Naive thymus-derived CD4-positive, alpha-beta T cell (primary cell): ENCODE measurements at regions of chr5 and their contacts with region 1.

Region 1: DNA sequence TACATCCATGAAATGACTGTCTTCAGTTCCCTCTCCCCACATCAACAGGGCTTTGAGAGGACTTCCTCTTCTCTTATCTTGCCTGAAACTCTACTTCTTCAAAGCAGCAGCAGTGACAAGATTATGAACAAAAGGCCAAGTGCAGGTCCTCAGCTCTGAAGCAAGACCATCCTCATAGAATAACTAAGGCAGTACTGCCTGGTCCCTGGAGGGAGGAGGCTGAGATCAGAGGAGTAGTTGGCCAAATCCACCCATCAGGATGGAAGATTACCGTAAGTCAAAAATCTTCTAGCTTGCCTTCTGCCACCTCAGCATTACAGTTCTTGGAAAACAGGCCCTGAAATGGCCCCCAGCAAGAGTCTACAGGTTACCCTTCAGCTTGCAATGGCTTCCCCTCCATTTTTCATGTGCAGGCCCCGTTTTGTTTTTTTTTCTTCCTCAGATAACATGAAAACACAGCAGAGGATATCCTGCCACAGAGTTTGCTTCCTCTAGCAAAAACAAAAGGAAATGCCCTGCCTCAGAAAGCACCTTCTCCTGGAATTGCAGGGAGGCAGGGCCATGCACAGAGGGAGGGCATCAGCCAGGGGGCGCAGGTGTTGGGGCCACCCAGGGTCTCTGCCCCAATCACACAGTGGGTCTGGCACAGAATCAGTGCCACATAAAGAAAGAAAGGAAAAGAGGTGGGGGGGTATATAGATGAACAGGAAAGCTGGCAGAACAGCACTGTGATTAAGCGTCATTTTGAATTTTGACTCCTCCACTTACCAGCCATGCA is 40.0 kb downstream of the KLHL3 start:
- DNase-seq: peak in 8 of 9 donors; percentile 7 to 77 (median 68)
- ATAC-seq: peak; percentile 82
- H3K4me3 ChIP-seq: peak overlapping the region; percentile 38
- H3K4me3 Mint-ChIP-seq: peak overlapping the region; percentile 62 to 85 (median 78)
- H3K27ac ChIP-seq: peak overlapping the region; percentile 58
- H3K27ac Mint-ChIP-seq: peak overlapping the region; percentile 90 to 98 (median 96)
- H3K4me1 ChIP-seq: peaks cover 22 to 47% of the 10 kb centered on the region in 2 donors
- H3K4me1 Mint-ChIP-seq: peaks cover 31 to 78% (median 76%) of the 10 kb centered on the region in 7 donors
- H3K27me3 ChIP-seq: no peaks in the 10 kb centered on the region
- H3K27me3 Mint-ChIP-seq: no peaks in the 10 kb centered on the region

Region 2: DNA sequence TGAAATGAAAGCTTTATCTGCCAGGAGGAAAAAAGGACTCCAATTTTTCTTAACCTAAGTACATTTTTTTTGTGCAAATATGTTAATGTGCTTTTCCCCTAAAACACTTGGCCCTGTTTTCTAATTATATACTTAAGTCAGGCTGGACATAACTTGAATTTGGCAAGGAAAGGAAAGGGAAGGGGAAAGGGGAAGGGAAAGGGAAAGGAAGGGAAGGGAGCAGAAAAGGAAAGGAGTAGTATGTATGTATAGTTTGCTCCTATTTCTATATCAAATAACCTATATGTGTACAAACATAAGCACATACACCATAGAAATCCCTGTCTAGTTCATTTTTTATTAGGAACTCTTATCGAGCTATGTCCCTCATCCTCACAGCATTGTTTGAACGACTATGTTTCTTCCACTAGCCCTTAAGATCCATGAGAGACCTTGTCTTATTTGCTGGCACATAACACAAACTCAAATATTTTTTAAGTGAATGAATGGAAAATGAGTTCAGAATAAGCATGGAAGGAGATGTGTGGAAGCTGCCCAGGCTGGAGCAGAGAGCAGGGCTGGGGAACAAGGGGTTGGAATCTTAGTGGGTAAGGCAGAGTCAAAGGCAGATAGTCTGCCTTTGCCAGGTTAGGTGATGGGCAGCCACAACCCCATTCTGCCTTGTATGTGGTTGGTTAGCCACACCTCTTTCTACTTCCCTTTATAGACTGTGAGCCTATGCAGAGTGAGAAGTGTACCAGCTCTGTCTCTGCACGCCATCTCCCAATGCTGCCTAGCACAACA is 30.0 kb before region 1 on chr5:
- CTCF ChIA-PET with region 1: interaction called, 73 read pairs
- POLR2A ChIA-PET with region 1: interaction called, 29 read pairs
- intact Hi-C with region 1: loop called in 1 of 2 experiments (anchors 2 kb)
- DNase-seq: peak in 8 of 9 donors; percentile 23 to 66 (median 53)
- ATAC-seq: peak; percentile 99
- H3K4me3 ChIP-seq: no peak overlapping the region
- H3K4me3 Mint-ChIP-seq: peak overlapping the region in 6 of 10 donors; percentile 18 to 56 (median 46)
- H3K27ac ChIP-seq: peak overlapping the region; percentile 30
- H3K27ac Mint-ChIP-seq: peak overlapping the region; percentile 43 to 91 (median 70)
- H3K4me1 ChIP-seq: peaks cover 7 to 9% of the 10 kb centered on the region in 2 donors
- H3K4me1 Mint-ChIP-seq: peaks cover 8 to 35% (median 27%) of the 10 kb centered on the region in 7 donors
- H3K27me3 ChIP-seq: no peaks in the 10 kb centered on the region
- H3K27me3 Mint-ChIP-seq: no peaks in the 10 kb centered on the region

Region 3: GRCh38 chr5:137684761-137685160 is 11.1 kb before region 1 on chr5:
- CTCF ChIA-PET with region 1: interaction called, 14 read pairs
- POLR2A ChIA-PET with region 1: interaction called, 5 read pairs
- intact Hi-C with region 1: no loop called
- DNase-seq: no peak
- ATAC-seq: no peak
- H3K4me3 ChIP-seq: no peak overlapping the region
- H3K4me3 Mint-ChIP-seq: no peak overlapping the region
- H3K27ac ChIP-seq: no peak overlapping the region
- H3K27ac Mint-ChIP-seq: no peak overlapping the region
- H3K4me1 ChIP-seq: no peaks in the 10 kb centered on the region
- H3K4me1 Mint-ChIP-seq: peaks cover 0 to 16% (median 3%) of the 10 kb centered on the region in 7 donors
- H3K27me3 ChIP-seq: no peaks in the 10 kb centered on the region
- H3K27me3 Mint-ChIP-seq: no peaks in the 10 kb centered on the region

Region 4: GRCh38 chr5:137735555-137736284 is 39.9 kb after region 1 on chr5 and contains the start of gene KLHL3:
- CTCF ChIA-PET with region 1: interaction called, 156 read pairs
- POLR2A ChIA-PET with region 1: interaction called, 197 read pairs
- intact Hi-C with region 1: loop called (anchors 1 to 2 kb)
- DNase-seq: peak in 8 of 9 donors; percentile 32 to 57 (median 44)
- ATAC-seq: peak; percentile 49
- H3K4me3 ChIP-seq: peak within 1 kb of the TSS; percentile 86
- H3K4me3 Mint-ChIP-seq: no peak within 1 kb of the TSS
- H3K27ac ChIP-seq: peak within 1 kb of the TSS; percentile 63
- H3K27ac Mint-ChIP-seq: no peak within 1 kb of the TSS
- H3K4me1 ChIP-seq: peaks cover 9 to 58% of the 10 kb centered on the region in 2 donors
- H3K4me1 Mint-ChIP-seq: peaks cover 0 to 42% (median 15%) of the 10 kb centered on the region in 7 donors
- H3K27me3 ChIP-seq: no peaks in the 10 kb centered on the region
- H3K27me3 Mint-ChIP-seq: no peaks in the 10 kb centered on the region
- total RNA-seq, gene KLHL3: 10.4 to 47.3 (median 26.6) TPM

Region 5: GRCh38 chr5:137743031-137743640 is 47.3 kb after region 1 on chr5:
- CTCF ChIA-PET with region 1: interaction called, 156 read pairs
- POLR2A ChIA-PET with region 1: interaction called, 197 read pairs
- intact Hi-C with region 1: no loop called
- DNase-seq: peak in 8 of 9 donors; percentile 34 to 77 (median 72)
- ATAC-seq: peak; percentile 93
- H3K4me3 ChIP-seq: no peak overlapping the region
- H3K4me3 Mint-ChIP-seq: peak overlapping the region in 1 of 10 donors; percentile 54
- H3K27ac ChIP-seq: no peak overlapping the region
- H3K27ac Mint-ChIP-seq: peak overlapping the region in 2 of 9 donors; percentile 64 to 70
- H3K4me1 ChIP-seq: peaks cover 1 to 12% of the 10 kb centered on the region in 2 donors
- H3K4me1 Mint-ChIP-seq: peaks cover 5 to 32% (median 12%) of the 10 kb centered on the region in 7 donors
- H3K27me3 ChIP-seq: no peaks in the 10 kb centered on the region
- H3K27me3 Mint-ChIP-seq: peaks cover 0 to 3% (median 0%) of the 10 kb centered on the region in 5 donors

Region 6: DNA sequence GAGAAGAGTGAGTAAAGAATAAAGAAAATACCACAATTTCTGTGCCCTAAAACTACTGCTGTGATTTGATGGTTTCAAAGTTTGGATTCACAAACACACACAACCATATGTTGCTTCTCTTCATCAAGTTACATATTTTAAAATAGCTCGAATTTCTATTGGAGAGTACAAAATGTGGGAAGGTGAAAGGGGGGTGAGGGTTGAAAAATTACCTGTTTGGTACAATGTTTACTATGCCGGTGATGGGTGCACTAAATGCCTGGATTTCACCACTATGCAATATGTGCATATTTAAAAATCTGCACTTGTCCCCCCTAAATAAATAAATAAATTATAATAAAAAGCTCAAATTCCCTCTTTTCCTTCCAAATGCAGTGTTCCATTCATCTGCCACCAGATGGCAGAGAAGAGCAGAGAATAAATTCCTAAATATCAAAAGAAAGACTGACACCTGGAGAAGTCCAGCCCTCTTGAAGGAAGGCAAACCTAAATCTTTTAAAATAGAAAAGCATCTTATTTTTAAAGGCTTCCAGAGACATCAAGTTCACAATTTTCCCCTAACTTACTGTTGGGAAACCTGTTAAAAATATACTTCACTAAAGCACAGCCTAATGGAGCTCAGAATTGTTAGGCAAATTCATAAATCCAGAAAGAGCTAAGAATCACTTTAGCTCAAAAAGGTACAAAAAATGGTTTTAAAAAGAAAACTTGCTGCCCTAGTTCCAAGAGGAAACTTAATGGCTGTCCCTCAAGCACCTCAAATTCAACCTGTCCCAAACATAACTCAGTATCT is 83.1 kb after region 1 on chr5:
- CTCF ChIA-PET with region 1: no interaction called
- POLR2A ChIA-PET with region 1: no interaction called
- intact Hi-C with region 1: no loop called
- DNase-seq: peak in 5 of 9 donors; percentile 11 to 29 (median 16)
- ATAC-seq: no peak
- H3K4me3 ChIP-seq: no peak overlapping the region
- H3K4me3 Mint-ChIP-seq: no peak overlapping the region
- H3K27ac ChIP-seq: no peak overlapping the region
- H3K27ac Mint-ChIP-seq: no peak overlapping the region
- H3K4me1 ChIP-seq: no peaks in the 10 kb centered on the region
- H3K4me1 Mint-ChIP-seq: no peaks in the 10 kb centered on the region
- H3K27me3 ChIP-seq: no peaks in the 10 kb centered on the region
- H3K27me3 Mint-ChIP-seq: peaks cover 0 to 12% (median 0%) of the 10 kb centered on the region in 5 donors